Activated CD4-positive, alpha-beta T cell treated with anti-CD3 and anti-CD28 coated beads, Interleukin-2, amount 10 ng/mL, durations not matched to agents 24 days and 14 days (primary cell): ENCODE measurements at regions of chr12 and their contacts with region 1.

Region 1: GRCh38 chr12:11780521-11781101 is 131.1 kb downstream of the ETV6 start:
- DNase-seq: peak; percentile 54
- H3K4me3 Mint-ChIP-seq: peak overlapping the region; percentile 29
- H3K27ac Mint-ChIP-seq: peak overlapping the region; percentile 87
- H3K4me1 Mint-ChIP-seq: peaks cover 66% of the 10 kb centered on the region
- H3K27me3 Mint-ChIP-seq: no peaks in the 10 kb centered on the region

Region 2: DNA sequence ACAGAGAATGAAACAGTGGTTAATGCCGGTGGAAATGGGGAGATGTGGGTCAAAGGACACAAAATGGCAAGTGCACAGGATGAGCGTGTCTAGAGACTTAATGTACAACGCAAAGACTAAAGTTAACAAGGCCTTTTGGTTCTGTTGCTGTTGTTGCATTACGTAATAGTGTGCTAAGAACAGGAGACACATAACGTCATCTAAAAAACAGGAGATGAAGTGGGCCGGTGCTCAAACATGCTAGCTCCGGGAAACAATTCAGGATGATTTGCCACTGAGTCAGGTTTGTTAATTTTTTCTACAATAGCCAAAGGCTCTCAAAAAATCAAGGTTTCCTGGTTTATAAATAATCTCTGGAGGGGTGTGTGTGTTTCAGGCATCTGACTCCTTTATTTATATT is 75.6 kb before region 1 on chr12:
- intact Hi-C with region 1: no loop called
- DNase-seq: no peak
- H3K4me3 Mint-ChIP-seq: no peak overlapping the region
- H3K27ac Mint-ChIP-seq: no peak overlapping the region
- H3K4me1 Mint-ChIP-seq: peaks cover 40% of the 10 kb centered on the region
- H3K27me3 Mint-ChIP-seq: no peaks in the 10 kb centered on the region

Region 3: GRCh38 chr12:11798856-11799501 is 18.4 kb after region 1 on chr12:
- intact Hi-C with region 1: loop called (anchors 2 kb)
- DNase-seq: no peak
- H3K4me3 Mint-ChIP-seq: peak overlapping the region; percentile 63
- H3K27ac Mint-ChIP-seq: peak overlapping the region; percentile 59
- H3K4me1 Mint-ChIP-seq: peaks cover 53% of the 10 kb centered on the region
- H3K27me3 Mint-ChIP-seq: no peaks in the 10 kb centered on the region

Region 4: DNA sequence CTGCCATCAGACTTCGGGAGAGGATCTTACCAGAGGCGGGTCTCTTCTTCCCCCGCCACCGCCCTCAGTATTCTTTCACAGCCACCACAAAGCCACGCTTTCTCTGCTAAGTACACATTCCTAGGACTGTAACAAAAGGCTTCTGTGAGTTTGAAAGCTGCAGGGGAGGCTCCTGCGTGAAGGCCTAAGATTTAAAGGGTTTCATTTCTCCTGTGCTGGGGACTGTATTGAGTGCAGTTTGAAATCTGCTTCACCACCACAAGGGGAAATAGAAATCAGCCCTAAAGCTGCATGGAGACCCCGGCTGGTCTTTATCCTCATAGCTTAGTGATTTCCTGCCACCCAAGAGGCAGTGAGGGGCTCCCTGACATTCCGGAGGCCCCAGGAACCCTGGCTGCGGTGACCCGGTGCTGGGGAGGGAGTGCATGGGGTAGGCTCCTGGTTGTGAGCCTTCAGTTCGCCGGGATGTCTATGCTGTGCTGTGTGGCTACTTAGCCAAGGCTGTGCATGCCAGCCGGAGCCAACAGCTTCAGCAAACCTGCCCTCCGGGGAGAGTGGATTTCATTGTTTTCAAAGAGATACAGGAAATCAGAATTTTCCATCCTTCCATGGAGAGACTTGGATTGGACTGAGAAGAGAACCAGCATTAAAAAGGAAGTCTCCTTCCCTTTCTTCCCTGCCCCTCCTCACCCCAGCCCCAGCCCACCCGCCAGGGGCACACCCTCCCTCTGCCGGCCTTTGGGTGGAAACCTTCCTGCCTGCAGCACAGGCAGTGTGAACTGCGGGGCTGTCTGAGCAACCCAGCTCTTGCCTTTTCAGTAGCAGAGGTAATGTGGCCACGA is 32.2 kb after region 1 on chr12:
- intact Hi-C with region 1: loop called (anchors 2 kb)
- DNase-seq: peak; percentile 71
- H3K4me3 Mint-ChIP-seq: peak overlapping the region; percentile 74
- H3K27ac Mint-ChIP-seq: peak overlapping the region; percentile 88
- H3K4me1 Mint-ChIP-seq: peaks cover 71% of the 10 kb centered on the region
- H3K27me3 Mint-ChIP-seq: no peaks in the 10 kb centered on the region

Region 5: GRCh38 chr12:11958221-11959091 is 177.8 kb after region 1 on chr12:
- intact Hi-C with region 1: loop called (anchors 2 kb)
- DNase-seq: peak; percentile 85
- H3K4me3 Mint-ChIP-seq: peak overlapping the region; percentile 27
- H3K27ac Mint-ChIP-seq: peak overlapping the region; percentile 91
- H3K4me1 Mint-ChIP-seq: peaks cover 57% of the 10 kb centered on the region
- H3K27me3 Mint-ChIP-seq: no peaks in the 10 kb centered on the region